Left cardiac atrium (tissue), 4 donors: ENCODE measurements at regions of chr20 and their contacts with region 1.

Region 1: GRCh38 chr20:1313236-1313964 is 15.5 kb downstream of the SDCBP2 start:
- DNase-seq: peak; percentile 85
- ATAC-seq: peak; percentile 83 to 91

Region 2: GRCh38 chr20:1437235-1437904 is 124.0 kb after region 1 on chr20:
- intact Hi-C with region 1: loop called (anchors 2 to 5 kb)
- DNase-seq: peak; percentile 67
- ATAC-seq: peak; percentile 68 to 70